Lower lobe of right lung (tissue), 2 donors: ENCODE measurements at regions of chr7 and their contacts with region 1.

Region 1: DNA sequence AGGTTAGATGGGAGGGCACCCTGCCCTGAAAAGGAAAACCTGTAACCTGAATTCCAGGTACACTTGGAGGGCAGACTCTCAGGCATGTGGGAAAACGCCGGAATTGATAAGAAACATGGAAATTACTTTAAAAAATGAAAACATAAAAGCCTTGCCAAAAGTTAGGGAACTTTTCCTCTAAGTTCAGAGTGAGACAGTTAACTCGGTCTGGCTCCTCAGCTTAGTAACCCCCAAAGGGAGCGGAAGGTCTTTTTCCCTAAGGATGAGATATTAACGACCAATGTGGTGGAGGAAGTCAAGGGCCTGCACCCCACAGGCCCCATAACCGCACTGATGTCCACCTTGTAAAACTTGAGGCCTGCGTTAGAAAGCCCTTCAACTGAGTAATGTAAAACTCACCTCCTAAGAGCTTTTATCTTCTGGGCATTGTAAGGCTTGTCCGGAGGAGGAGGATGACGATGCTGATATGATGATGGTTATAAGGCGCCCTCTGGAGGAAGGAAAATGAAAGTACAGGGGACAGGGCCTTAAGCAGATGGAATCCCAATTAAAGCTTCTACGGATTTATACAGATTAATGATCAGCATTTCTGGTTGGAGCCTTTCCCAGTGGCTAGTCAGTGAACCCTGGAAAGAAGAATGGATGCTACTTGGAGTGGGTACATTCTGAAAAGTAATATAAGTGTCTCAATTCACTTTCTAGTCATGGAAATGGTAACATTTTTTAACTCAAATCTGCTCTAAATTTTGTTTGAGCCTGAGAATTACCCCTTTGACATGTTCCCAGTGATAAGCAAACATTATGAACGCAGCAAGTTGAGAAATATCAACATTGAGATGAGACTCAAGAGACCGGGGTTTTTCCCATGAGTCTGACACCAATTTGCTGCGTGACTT is 694 bp downstream of the COL1A2 start:
- DNase-seq: no peak
- ATAC-seq: peak; percentile 87 to 88
- H3K4me3 ChIP-seq: peak overlapping the region; percentile 57
- H3K27ac ChIP-seq: peak overlapping the region; percentile 85
- H3K4me1 ChIP-seq: no peaks in the 10 kb centered on the region
- H3K27me3 ChIP-seq: no peaks in the 10 kb centered on the region
- CTCF ChIP-seq: peak; percentile 83

Region 2: GRCh38 chr7:93799750-93800357 is 595.5 kb before region 1 on chr7:
- intact Hi-C with region 1: no loop called
- DNase-seq: no peak
- ATAC-seq: no peak
- H3K4me3 ChIP-seq: no peak overlapping the region
- H3K27ac ChIP-seq: no peak overlapping the region
- H3K4me1 ChIP-seq: no peaks in the 10 kb centered on the region
- H3K27me3 ChIP-seq: no peaks in the 10 kb centered on the region
- CTCF ChIP-seq: peak; percentile 18

Region 3: GRCh38 chr7:94295850-94296249 is 99.5 kb before region 1 on chr7:
- intact Hi-C with region 1: loop called (anchors 10 kb)
- DNase-seq: no peak
- ATAC-seq: peak in 1 of 2 donors; percentile 55
- H3K4me3 ChIP-seq: peak overlapping the region; percentile 2
- H3K27ac ChIP-seq: peak overlapping the region; percentile 59
- H3K4me1 ChIP-seq: no peaks in the 10 kb centered on the region
- H3K27me3 ChIP-seq: no peaks in the 10 kb centered on the region
- CTCF ChIP-seq: peak; percentile 41

Region 4: DNA sequence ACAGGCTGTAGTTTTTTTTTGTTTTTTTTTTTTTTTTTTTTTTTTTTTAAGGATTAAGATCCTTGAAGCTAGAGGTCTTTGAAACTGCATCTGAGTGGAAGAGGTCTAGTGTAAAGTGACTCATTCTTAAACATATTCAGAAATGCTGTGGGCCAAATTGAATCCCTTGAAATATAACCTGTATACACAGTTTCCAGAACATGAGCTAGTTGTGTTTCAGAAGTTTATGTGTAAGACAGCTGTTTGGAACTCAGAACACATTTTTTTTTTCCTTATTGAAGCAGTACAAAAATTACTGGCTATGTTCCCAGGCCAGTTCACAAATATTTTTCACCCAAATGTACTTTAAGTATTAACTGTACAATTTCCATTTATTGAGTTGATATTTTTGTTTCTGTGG is 579.9 kb after region 1 on chr7:
- intact Hi-C with region 1: no loop called
- DNase-seq: no peak
- ATAC-seq: peak in 1 of 2 donors; percentile 49
- H3K4me3 ChIP-seq: no peak overlapping the region
- H3K27ac ChIP-seq: no peak overlapping the region
- H3K4me1 ChIP-seq: peaks cover 23% of the 10 kb centered on the region
- H3K27me3 ChIP-seq: no peaks in the 10 kb centered on the region
- CTCF ChIP-seq: no peak